ENCODE measurements at regions of chr5 and their contacts with region 1.

Region 1: DNA sequence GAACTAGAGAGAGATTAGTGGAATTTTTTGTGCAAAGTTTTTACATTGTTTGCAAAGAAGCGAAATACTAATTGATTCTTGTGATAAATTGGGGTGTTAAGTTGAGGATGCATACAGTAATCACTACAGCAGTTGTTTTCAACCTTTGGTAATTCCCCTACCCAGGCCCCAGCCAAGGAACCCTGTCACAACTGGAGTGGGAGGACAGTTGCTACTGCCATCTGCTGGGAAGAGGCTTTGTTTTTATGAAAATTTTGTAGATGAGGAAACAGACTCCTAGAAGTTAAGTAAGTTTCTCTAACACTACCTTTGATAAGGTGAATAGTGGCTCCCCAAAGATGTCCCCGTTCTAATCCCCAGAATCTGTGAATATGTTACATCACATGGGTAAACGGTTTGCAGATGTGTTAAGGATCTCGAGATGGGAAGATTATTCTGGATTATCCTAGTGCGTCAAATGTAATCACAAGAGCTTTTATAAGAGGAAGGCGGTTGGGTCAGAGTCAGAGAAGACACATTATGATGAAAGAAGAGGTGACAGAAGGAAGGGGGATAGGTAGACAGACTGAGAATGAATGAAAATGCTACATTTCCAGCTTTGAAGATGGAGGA is 34.0 kb upstream of the PPP1R2B start:
- DNase-seq: peak; percentile 14
- ATAC-seq: peak; percentile 71
- H3K4me3 ChIP-seq: no peak overlapping the region
- H3K27ac ChIP-seq: no peak overlapping the region
- H3K4me1 ChIP-seq: no peaks in the 10 kb centered on the region
- H3K27me3 ChIP-seq: no peaks in the 10 kb centered on the region; a peak in 1 of 5 replicates
- CTCF ChIP-seq: peak; percentile 65
- EP300 ChIP-seq: no peak
- POLR2A ChIP-seq: no peak
- RAD21 ChIP-seq: peak; percentile 34; the same call in 1 of the 2 replicates

Region 2: GRCh38 chr5:156667616-156668015 is 148.5 kb before region 1 on chr5:
- CTCF ChIA-PET with region 1: no interaction called
- POLR2A ChIA-PET with region 1: no interaction called
- in situ Hi-C with region 1: loop called (anchors 5 kb)
- intact Hi-C with region 1: loop called (anchors 5 kb)
- DNase-seq: no peak
- ATAC-seq: no peak
- H3K4me3 ChIP-seq: no peak overlapping the region
- H3K27ac ChIP-seq: no peak overlapping the region
- H3K4me1 ChIP-seq: no peaks in the 10 kb centered on the region
- H3K27me3 ChIP-seq: no peaks in the 10 kb centered on the region; a peak in 1 of 5 replicates
- CTCF ChIP-seq: no peak
- EP300 ChIP-seq: no peak
- POLR2A ChIP-seq: no peak
- RAD21 ChIP-seq: no peak

Region 3: DNA sequence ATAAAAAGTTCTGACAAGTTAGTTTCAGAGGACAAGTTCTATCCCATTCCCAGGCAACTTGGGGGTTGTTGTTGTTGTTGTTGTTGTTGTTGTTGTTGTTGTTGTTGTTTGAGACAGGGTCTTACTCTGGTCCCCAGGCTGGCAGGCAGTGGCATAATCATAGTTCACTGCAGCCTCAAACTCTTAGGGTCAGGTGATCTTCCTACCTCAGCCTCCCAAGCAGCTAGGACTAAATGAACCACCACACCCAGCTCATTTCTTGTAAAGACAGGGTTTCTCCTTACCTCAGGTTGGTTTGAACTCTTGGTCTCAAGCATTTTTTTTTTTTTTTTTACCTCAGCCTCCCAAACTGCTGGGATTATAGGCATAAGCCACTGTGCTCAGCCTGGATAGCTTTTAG is 49.3 kb after region 1 on chr5:
- CTCF ChIA-PET with region 1: no interaction called
- POLR2A ChIA-PET with region 1: no interaction called
- in situ Hi-C with region 1: no loop called
- intact Hi-C with region 1: no loop called
- DNase-seq: no peak
- ATAC-seq: no peak
- H3K4me3 ChIP-seq: no peak overlapping the region
- H3K27ac ChIP-seq: no peak overlapping the region
- H3K4me1 ChIP-seq: no peaks in the 10 kb centered on the region
- H3K27me3 ChIP-seq: no peaks in the 10 kb centered on the region
- CTCF ChIP-seq: no peak
- EP300 ChIP-seq: no peak
- POLR2A ChIP-seq: no peak
- RAD21 ChIP-seq: no peak

Region 4: GRCh38 chr5:157464519-157465171 is 648.6 kb after region 1 on chr5:
- CTCF ChIA-PET with region 1: no interaction called
- POLR2A ChIA-PET with region 1: no interaction called
- in situ Hi-C with region 1: no loop called
- intact Hi-C with region 1: no loop called
- DNase-seq: no peak
- ATAC-seq: no peak
- H3K4me3 ChIP-seq: no peak overlapping the region
- H3K27ac ChIP-seq: no peak overlapping the region
- H3K4me1 ChIP-seq: no peaks in the 10 kb centered on the region
- H3K27me3 ChIP-seq: peaks cover 3 to 41% of the 10 kb centered on the region in 2 experiments; a peak in 3 of 5 replicates
- CTCF ChIP-seq: no peak
- EP300 ChIP-seq: no peak
- POLR2A ChIP-seq: no peak
- RAD21 ChIP-seq: no peak

Measured in HepG2 (cell line).